ENCODE measurements at regions of chr3 and their contacts with region 1.

Region 1: DNA sequence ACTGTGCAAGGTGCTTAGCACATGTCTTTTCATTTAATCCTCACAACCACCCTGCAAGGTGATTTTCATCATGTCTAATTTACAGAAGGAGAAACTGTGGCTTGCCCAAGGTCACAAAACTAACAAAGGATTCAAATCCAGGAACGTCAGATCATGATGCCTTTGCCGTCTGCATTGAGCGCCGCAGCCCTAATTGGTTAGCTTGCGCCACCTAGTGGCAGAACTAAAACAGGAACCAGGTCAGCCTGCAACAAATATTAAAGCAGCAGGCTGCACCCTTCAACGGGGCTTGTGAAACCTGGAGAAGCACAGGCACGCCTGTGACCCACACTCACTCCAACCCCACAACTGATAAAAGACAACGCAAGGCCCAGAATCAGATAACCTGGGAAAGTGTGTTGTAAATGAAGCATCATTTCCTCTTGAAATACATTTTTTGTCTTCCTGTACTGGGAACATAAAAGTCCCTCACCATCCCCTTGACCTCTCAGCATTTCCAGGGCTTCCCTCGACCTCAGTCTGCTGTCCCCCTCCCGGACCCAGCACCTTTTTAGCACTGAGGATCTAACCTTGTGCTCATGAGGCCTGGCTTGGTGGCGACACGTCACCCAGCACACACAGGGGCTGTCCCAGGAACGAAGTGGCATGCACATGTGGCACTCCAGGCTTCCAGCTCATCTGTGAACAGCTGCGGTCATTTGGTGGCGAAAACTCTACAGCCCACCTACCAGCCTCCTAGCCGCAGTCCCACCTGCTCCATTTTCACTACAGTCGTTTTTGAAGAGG is 17.3 kb downstream of the DPH3 start:
- DNase-seq: peak; percentile 85 to 93
- H3K4me3 ChIP-seq: peak overlapping the region in 1 of 4 donors; percentile 20
- H3K27ac ChIP-seq: no peak overlapping the region
- H3K4me1 ChIP-seq: peaks cover 0 to 19% (median 8%) of the 10 kb centered on the region in 4 donors
- H3K27me3 ChIP-seq: no peaks in the 10 kb centered on the region
- CTCF ChIP-seq: peak in 5 of 7 experiments; percentile 76 to 98 (median 82)
- EP300 ChIP-seq: no peak
- POLR2A ChIP-seq: no peak

Region 2: DNA sequence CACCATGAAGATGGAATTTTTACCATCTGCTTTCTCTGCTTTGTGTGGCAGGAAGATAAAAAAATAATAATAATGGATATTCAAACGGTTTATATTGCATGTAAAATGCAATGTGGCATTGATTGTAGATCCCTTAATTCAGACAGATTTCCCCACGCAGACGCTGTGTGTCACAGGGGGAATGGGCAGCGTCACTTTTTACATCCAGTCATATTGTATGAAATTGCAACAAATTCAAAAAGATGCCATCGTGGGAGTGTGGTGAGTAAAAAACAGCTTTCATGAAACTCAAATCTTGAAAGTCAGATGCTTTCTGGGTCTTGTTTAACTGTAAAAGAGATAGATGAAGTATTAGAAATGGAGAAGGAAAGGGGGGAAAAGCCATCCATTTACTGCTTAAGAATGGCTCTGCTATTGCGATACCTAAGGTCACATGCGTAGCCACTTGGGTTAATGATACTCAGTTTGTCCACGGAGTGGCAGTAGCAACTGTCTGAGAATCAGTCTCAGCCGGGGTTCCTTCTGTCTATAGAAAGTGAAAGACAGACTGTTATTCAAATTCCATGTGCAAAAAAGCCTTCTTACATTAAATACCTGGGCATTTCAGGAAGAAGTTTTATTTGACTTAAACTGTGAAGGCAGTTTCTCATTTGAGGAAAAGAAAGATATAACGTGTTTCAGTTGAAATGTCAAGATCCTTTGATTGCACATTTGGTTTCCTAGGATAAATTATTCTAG is 617.4 kb before region 1 on chr3:
- intact Hi-C with region 1: loop called (anchors 10 kb)
- DNase-seq: peak; percentile 63 to 89
- H3K4me3 ChIP-seq: peak overlapping the region; percentile 12 to 33 (median 25)
- H3K27ac ChIP-seq: peak overlapping the region in 4 of 5 donors; percentile 5 to 67 (median 40)
- H3K4me1 ChIP-seq: peaks cover 20 to 52% (median 33%) of the 10 kb centered on the region in 4 donors
- H3K27me3 ChIP-seq: no peaks in the 10 kb centered on the region
- CTCF ChIP-seq: peak in 5 of 7 experiments; percentile 55 to 74 (median 66)
- EP300 ChIP-seq: no peak
- POLR2A ChIP-seq: no peak

Region 3: DNA sequence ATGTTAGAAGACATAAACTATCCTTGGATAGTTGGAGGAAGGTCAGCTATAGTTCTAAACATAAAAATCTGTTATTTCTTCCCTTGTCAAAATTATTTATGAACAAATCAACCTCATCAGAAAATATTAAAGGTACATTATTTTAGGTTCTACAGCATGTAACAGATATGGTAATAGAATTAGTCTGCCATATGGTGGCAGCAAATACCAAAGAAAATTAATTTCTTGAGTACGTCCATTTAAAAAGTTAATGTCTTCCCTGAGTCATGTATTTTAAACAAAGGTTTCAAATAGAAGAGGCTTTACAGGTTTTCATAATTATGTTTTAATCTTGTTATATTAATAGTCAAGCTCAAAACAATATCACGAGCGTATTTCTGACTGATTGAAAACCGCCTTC is 431.8 kb before region 1 on chr3:
- intact Hi-C with region 1: loop called (anchors 10 kb)
- DNase-seq: peak in 1 of 2 donors; percentile 79
- H3K4me3 ChIP-seq: no peak overlapping the region
- H3K27ac ChIP-seq: no peak overlapping the region
- H3K4me1 ChIP-seq: peaks cover 0 to 29% (median 11%) of the 10 kb centered on the region in 4 donors
- H3K27me3 ChIP-seq: no peaks in the 10 kb centered on the region
- CTCF ChIP-seq: peak in 3 of 7 experiments; percentile 20 to 39 (median 38)
- EP300 ChIP-seq: no peak
- POLR2A ChIP-seq: no peak

Region 4: DNA sequence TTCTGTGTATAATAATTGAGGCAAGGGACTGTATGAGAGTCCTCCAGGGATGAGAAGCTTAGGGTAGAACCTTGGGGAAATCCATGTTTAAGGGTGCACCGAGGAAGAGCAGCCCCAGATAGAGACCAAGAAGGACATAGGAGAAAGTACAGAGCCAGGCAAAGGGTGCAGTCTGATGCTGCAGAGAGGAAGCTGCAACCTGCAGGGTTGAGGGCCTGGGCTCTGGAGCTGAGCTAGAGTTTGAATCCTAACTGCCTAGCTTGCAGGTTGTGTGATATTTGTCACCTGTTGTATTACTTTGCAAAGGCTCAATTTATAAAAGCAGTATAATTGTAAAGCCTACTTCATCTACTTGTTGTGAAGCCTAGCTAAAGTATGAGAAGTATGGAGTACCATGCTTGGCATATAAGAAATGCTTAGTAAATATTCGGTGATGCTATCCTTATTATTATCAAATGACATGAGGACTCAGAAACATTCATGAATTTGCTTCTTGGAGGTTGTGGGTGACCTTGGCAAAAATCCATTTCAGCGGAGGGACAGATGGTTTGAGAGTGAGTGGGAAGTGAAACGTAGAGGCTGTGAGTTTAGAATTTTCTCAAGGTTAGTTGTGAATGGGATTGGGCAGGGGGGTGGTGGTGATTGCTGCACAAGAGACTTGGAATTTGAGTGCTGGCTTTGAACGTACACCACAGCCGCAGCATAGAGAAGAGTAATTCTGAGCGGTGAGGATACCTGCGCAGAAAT is 681.1 kb after region 1 on chr3:
- intact Hi-C with region 1: no loop called
- DNase-seq: no peak
- H3K4me3 ChIP-seq: no peak overlapping the region
- H3K27ac ChIP-seq: no peak overlapping the region
- H3K4me1 ChIP-seq: peaks cover 3 to 17% (median 11%) of the 10 kb centered on the region in 4 donors
- H3K27me3 ChIP-seq: no peaks in the 10 kb centered on the region
- CTCF ChIP-seq: no peak
- EP300 ChIP-seq: no peak
- POLR2A ChIP-seq: no peak